ENCODE measurements at regions of chr6 and their contacts with region 1.

Region 1: DNA sequence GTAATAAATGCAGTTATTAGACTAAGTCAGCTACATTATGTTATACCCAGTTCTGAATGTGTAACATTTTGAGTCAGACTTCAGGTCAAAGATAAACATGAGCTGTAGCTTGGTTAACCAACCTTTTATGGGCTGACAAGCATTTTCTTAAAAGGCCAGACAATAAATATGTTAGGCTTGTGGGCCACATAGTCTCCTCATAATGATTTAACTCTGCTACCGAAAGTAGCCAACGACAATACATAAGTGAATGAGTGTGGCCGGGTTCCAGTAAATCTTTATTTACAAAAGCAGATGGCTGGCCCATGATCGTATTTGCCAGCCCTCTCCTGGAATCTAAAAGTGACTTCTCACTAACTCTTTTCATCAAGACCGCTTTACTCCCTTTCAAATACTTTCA is 49.9 kb downstream of the ATG5 start:
- DNase-seq: no peak
- ATAC-seq: no peak
- H3K4me3 ChIP-seq: no peak overlapping the region
- H3K4me3 Mint-ChIP-seq: no peak overlapping the region
- H3K27ac ChIP-seq: no peak overlapping the region
- H3K27ac Mint-ChIP-seq: no peak overlapping the region
- H3K4me1 ChIP-seq: peaks cover 0 to 5% of the 10 kb centered on the region in 2 donors
- H3K4me1 Mint-ChIP-seq: peaks cover 6 to 29% (median 19%) of the 10 kb centered on the region in 7 donors
- H3K27me3 ChIP-seq: no peaks in the 10 kb centered on the region
- H3K27me3 Mint-ChIP-seq: no peaks in the 10 kb centered on the region

Region 2: GRCh38 chr6:106256201-106256968 is 19.3 kb before region 1 on chr6:
- CTCF ChIA-PET with region 1: no interaction called
- POLR2A ChIA-PET with region 1: interaction called, 3 read pairs
- intact Hi-C with region 1: loop called in 1 of 2 experiments (anchors 2 kb)
- DNase-seq: no peak
- ATAC-seq: no peak
- H3K4me3 ChIP-seq: no peak overlapping the region
- H3K4me3 Mint-ChIP-seq: no peak overlapping the region
- H3K27ac ChIP-seq: no peak overlapping the region
- H3K27ac Mint-ChIP-seq: no peak overlapping the region
- H3K4me1 ChIP-seq: no peaks in the 10 kb centered on the region
- H3K4me1 Mint-ChIP-seq: peaks cover 5 to 40% (median 27%) of the 10 kb centered on the region in 7 donors
- H3K27me3 ChIP-seq: no peaks in the 10 kb centered on the region
- H3K27me3 Mint-ChIP-seq: no peaks in the 10 kb centered on the region